ENCODE measurements at regions of chr6 and their contacts with region 1.

Region 1: GRCh38 chr6:20377623-20378265 is 23.9 kb upstream of the E2F3 start:
- DNase-seq: no peak
- ATAC-seq: no peak
- H3K4me3 Mint-ChIP-seq: no peak overlapping the region
- H3K27ac Mint-ChIP-seq: no peak overlapping the region
- H3K4me1 Mint-ChIP-seq: peaks cover 22% of the 10 kb centered on the region
- H3K27me3 Mint-ChIP-seq: no peaks in the 10 kb centered on the region

Region 2: DNA sequence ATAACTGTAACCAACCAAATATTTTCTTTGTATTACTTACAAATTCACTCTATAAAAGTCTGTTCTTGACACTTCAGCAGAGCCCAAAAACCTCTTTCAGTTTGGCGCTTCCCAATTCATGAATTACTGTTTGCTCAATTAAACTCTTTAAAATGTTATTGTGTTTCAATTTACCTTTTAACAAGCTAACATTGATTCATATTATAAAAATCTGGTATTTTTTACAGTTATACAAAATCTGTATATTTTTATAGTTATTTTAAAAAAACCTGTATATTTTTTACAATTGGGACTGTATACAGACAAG is 51.4 kb before region 1 on chr6:
- CTCF ChIA-PET with region 1: no interaction called
- POLR2A ChIA-PET with region 1: no interaction called
- DNase-seq: no peak
- ATAC-seq: no peak
- H3K4me3 Mint-ChIP-seq: no peak overlapping the region
- H3K27ac Mint-ChIP-seq: no peak overlapping the region
- H3K4me1 Mint-ChIP-seq: peaks cover 4% of the 10 kb centered on the region
- H3K27me3 Mint-ChIP-seq: no peaks in the 10 kb centered on the region

Region 3: GRCh38 chr6:20350215-20350614 is 27.5 kb before region 1 on chr6:
- CTCF ChIA-PET with region 1: no interaction called
- POLR2A ChIA-PET with region 1: no interaction called
- DNase-seq: no peak
- ATAC-seq: no peak
- H3K4me3 Mint-ChIP-seq: no peak overlapping the region
- H3K27ac Mint-ChIP-seq: no peak overlapping the region
- H3K4me1 Mint-ChIP-seq: peaks cover 14% of the 10 kb centered on the region
- H3K27me3 Mint-ChIP-seq: no peaks in the 10 kb centered on the region

Region 4: DNA sequence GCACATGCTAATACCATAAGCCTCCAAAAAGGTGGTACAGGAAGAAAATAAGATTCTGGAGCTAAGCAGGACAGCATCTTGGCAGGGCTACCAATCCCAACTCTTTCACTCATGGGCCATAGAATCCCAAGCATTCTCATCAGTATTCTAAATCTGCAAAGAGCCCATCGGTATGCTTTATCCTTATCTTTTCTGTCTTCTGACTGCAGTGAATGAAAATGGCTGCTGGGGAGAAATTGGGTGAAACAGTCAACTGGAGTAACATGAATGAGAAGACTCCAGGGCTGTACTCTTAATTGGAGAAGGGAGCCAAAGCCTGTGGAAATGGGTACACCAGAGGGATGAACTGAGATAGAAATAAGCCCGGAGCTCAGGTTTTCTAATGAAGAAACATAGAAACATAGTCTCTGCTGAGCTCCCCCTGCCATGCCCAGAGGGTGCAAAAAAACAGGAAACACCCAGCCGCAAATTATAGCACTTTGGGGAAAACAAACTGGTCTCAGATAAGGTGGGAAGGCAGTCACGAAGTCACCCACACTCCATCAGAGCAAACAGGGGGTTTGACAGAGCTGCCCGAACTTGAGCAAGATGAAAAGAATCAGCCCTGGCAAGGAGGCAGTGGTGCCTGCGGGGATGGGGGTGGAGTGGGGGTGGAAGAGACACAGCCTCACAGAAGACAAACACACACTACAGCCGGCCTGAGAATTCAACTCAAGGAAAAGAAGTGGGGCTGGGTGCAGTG is 11.5 kb before region 1 on chr6:
- CTCF ChIA-PET with region 1: interaction called, 22 read pairs
- POLR2A ChIA-PET with region 1: interaction called, 8 read pairs
- DNase-seq: peak; percentile 64
- ATAC-seq: peak; percentile 75
- H3K4me3 Mint-ChIP-seq: peak overlapping the region; percentile 61
- H3K27ac Mint-ChIP-seq: peak overlapping the region; percentile 95
- H3K4me1 Mint-ChIP-seq: peaks cover 63% of the 10 kb centered on the region
- H3K27me3 Mint-ChIP-seq: no peaks in the 10 kb centered on the region

Region 5: DNA sequence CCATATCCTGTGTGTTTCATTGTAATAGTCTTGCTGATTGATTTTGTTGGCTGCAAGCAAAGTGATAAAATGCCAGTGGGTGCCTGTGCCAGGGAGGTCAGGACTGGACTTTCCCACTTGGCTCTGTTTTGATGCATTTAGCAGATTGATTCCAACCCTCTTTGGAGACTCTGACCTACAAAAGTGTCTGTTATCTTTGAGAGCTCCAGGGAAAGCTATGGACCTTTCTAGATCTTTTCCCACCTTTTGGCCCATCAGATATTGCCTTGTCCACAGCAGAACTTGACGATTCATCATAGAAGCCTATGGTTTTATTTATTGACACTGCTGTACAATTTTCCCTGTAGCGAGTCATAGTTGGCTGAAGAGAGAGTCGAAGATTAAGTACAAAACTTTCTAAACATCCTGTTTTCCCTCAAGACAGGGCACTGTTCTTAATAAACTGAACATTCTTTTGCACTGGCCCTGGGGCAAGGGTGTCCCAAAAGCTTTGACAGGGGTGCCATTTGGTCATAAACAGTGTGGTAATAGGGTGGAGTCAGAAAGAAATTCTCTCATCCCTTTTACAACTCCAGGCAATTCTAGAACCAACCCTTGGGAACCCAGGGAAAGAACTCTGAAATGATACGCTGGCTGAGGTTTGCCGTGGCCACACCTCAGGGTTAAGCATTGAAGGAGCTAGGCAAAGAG is 77.7 kb after region 1 on chr6:
- CTCF ChIA-PET with region 1: no interaction called
- POLR2A ChIA-PET with region 1: no interaction called
- DNase-seq: no peak
- ATAC-seq: no peak
- H3K4me3 Mint-ChIP-seq: no peak overlapping the region
- H3K27ac Mint-ChIP-seq: no peak overlapping the region
- H3K4me1 Mint-ChIP-seq: peaks cover 13% of the 10 kb centered on the region
- H3K27me3 Mint-ChIP-seq: no peaks in the 10 kb centered on the region

Region 6: GRCh38 chr6:20497216-20498040 is 119.7 kb after region 1 on chr6:
- CTCF ChIA-PET with region 1: no interaction called
- POLR2A ChIA-PET with region 1: no interaction called
- DNase-seq: no peak
- ATAC-seq: no peak
- H3K4me3 Mint-ChIP-seq: no peak overlapping the region
- H3K27ac Mint-ChIP-seq: no peak overlapping the region
- H3K4me1 Mint-ChIP-seq: no peaks in the 10 kb centered on the region
- H3K27me3 Mint-ChIP-seq: peaks cover 8% of the 10 kb centered on the region